GM12878 (cell line): ENCODE measurements at regions of chr15 and their contacts with region 1.

Region 1: GRCh38 chr15:68909601-68910100 is 20.7 kb upstream of the SPESP1 start:
- DNase-seq: no peak
- ATAC-seq: no peak
- H3K4me3 ChIP-seq: no peak overlapping the region
- H3K27ac ChIP-seq: no peak overlapping the region
- H3K4me1 ChIP-seq: no peaks in the 10 kb centered on the region
- H3K27me3 ChIP-seq: no peaks in the 10 kb centered on the region; a peak in 2 of 4 replicates
- CTCF ChIP-seq: no peak
- EP300 ChIP-seq: no peak
- POLR2A ChIP-seq: no peak
- RAD21 ChIP-seq: no peak

Region 2: DNA sequence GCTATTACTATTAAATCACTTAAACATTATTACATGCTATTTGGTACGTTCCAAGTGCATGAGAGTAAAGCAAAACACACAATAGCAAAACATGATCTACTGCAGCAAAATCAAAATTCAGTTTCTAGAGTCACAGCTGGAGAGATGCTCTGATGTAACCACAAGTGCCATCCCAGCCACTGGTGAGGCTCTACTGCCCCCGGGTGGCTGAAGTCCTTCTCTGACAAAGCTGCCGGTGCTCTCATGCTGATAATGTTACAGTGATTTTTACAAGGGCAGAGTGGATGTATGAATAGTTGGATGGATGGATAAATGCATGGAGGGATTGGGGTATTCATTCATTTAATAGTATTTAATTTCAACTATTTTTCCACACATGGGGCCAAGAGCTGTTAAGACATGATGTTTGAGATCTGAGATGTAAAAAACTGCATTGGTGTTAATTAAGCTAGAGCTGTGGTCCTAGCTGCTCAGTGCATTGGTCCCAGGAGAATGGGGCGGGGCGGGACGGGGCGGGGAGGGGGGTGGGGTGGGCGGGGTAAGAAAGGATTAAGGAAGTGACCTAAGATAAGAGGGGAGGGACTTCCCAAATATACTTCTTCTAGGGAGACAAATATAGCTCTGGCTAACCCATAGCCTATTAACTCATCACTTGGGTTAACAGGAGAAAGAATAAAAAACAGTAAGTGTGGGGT is 15.4 kb after region 1 on chr15:
- CTCF ChIA-PET with region 1: interaction called, 10 read pairs
- POLR2A ChIA-PET with region 1: no interaction called
- RAD21 ChIA-PET with region 1: no interaction called
- SMC1A ChIA-PET with region 1: no interaction called
- in situ Hi-C with region 1: no loop called
- intact Hi-C with region 1: no loop called
- DNase-seq: peak; percentile 20
- ATAC-seq: peak; percentile 93
- H3K4me3 ChIP-seq: no peak overlapping the region
- H3K27ac ChIP-seq: no peak overlapping the region
- H3K4me1 ChIP-seq: no peaks in the 10 kb centered on the region
- H3K27me3 ChIP-seq: peaks cover 0 to 3% of the 10 kb centered on the region in 2 experiments; a peak in 1 of 4 replicates
- CTCF ChIP-seq: peak; percentile 74 to 78 (median 75); a peak in 5 of 6 replicates
- EP300 ChIP-seq: no peak
- POLR2A ChIP-seq: no peak
- RAD21 ChIP-seq: peak; percentile 65